ENCODE measurements at regions of chr4 and their contacts with region 1.

Region 1: GRCh38 chr4:40309250-40309774 is 25.8 kb upstream of the CHRNA9 start:
- DNase-seq: peak; percentile 92
- ATAC-seq: peak; percentile 61
- H3K4me3 Mint-ChIP-seq: peak overlapping the region; percentile 83
- H3K27ac Mint-ChIP-seq: peak overlapping the region; percentile 94
- H3K4me1 Mint-ChIP-seq: peaks cover 74% of the 10 kb centered on the region
- H3K27me3 Mint-ChIP-seq: no peaks in the 10 kb centered on the region

Region 2: DNA sequence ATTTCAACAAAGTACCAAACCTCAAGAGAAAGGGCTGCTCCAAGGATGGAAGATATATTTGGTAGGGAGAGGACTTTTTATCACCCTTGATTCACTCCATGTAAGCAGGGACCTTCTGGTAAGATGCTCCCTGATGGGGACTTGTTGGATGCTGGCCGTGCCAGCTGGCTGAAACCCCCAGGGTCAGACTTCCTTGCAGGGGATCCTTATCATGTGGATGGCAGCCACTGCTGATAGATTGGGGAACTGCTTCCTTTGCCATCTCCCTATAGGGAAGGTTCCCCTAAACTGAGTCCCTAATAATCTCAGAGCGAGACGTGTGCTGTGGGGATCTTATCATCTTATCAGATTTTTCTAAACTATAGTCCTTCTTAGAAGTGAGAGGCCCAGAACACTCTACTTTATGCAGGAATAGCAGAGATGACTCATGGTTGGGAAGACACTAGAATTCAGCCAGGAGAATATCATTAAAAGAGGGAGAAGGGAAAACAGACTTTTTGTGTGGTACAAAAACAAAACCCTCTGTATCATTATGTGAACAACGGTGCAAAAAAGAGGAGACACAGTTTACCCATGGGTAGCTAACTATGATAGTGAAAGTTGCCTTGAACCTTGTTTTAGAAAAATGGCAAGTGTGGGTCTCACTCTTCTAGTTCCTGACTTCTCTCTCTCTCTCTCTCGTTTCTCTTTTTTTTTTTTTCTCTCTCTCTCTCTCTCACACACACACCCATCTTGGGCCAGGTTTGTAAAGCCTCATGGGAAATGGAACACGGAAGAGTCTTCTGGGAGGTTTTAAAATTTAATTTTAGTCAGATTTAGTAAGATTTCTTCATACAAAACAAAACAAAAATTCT is 96.4 kb before region 1 on chr4:
- POLR2A ChIA-PET with region 1: interaction called, 14 read pairs
- DNase-seq: no peak
- ATAC-seq: peak; percentile 35
- H3K4me3 Mint-ChIP-seq: peak overlapping the region; percentile 82
- H3K27ac Mint-ChIP-seq: peak overlapping the region; percentile 92
- H3K4me1 Mint-ChIP-seq: peaks cover 74% of the 10 kb centered on the region
- H3K27me3 Mint-ChIP-seq: no peaks in the 10 kb centered on the region

Region 3: DNA sequence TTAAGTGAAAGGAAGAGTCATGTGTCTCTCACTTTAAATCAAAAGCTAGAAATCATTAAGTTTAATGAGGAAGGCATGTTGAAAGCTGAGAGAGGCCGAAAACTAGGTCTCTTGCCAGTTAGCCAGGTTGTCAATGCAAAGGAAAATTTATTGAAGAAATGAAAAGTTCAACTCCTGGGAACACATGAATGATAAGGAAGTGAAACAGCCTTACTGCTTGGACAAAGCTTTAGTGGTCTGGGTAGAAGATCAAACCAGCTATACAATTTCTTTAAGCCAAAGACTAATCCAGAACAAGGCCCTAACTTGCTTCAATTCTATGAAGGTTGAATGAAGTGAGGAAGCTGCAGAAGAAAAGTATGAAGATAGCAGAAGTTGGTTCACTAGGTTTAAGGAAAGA is 87.6 kb before region 1 on chr4:
- POLR2A ChIA-PET with region 1: interaction called, 12 read pairs
- DNase-seq: no peak
- ATAC-seq: no peak
- H3K4me3 Mint-ChIP-seq: peak overlapping the region; percentile 70
- H3K27ac Mint-ChIP-seq: peak overlapping the region; percentile 82
- H3K4me1 Mint-ChIP-seq: peaks cover 77% of the 10 kb centered on the region
- H3K27me3 Mint-ChIP-seq: no peaks in the 10 kb centered on the region

Region 4: GRCh38 chr4:40238700-40239548 is 70.4 kb before region 1 on chr4:
- POLR2A ChIA-PET with region 1: interaction called, 12 read pairs
- DNase-seq: peak; percentile 60
- ATAC-seq: peak; percentile 90
- H3K4me3 Mint-ChIP-seq: peak overlapping the region; percentile 81
- H3K27ac Mint-ChIP-seq: peak overlapping the region; percentile 92
- H3K4me1 Mint-ChIP-seq: peaks cover 79% of the 10 kb centered on the region
- H3K27me3 Mint-ChIP-seq: no peaks in the 10 kb centered on the region

Region 5: GRCh38 chr4:40325189-40326019 is 16.1 kb after region 1 on chr4:
- POLR2A ChIA-PET with region 1: interaction called, 12 read pairs
- DNase-seq: no peak
- ATAC-seq: peak; percentile 97
- H3K4me3 Mint-ChIP-seq: peak overlapping the region; percentile 7
- H3K27ac Mint-ChIP-seq: peak overlapping the region; percentile 6
- H3K4me1 Mint-ChIP-seq: peaks cover 31% of the 10 kb centered on the region
- H3K27me3 Mint-ChIP-seq: no peaks in the 10 kb centered on the region